ENCODE measurements at regions of chr18 and their contacts with region 1.

Region 1: DNA sequence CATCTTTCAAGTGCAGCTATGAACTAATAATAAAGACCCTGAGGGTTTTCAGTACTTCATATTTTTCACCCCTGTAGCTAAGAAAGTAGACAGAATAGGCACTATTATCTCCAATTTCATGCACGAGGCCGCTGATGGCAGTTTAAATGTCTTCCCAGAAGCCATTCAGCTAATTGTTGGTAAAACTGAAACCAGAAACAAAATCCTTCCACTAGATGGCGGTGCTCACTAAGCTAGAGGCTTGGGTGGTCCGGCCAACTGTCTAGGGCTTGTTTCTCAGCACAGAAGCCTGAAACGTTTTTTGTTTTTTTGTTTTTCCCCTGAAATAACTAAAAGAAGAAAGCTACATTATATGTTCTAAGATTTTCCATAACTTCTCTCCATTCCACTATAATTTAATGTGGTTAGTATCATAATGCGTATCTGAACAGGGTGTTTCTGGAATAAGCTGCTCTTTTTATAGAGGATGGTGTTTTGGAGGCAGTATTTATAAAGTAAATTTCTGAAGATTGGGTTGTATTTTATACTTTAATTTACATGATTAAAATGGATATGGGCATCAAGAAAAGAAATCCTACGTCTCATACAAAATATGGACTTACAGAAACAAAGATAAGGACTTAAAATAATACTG is 159.4 kb downstream of the PIK3C3 start:
- DNase-seq: peak; percentile 52
- H3K4me3 ChIP-seq: peak overlapping the region in 1 of 2 experiments; percentile 49; a peak in 1 of 4 replicates
- H3K27ac ChIP-seq: peak overlapping the region; percentile 32 to 34; a peak in 3 of 4 replicates
- H3K4me1 ChIP-seq: peaks cover 0 to 8% of the 10 kb centered on the region in 2 experiments; a peak in 2 of 4 replicates
- H3K27me3 ChIP-seq: no peaks in the 10 kb centered on the region
- CTCF ChIP-seq: peak; percentile 95
- EP300 ChIP-seq: no peak
- RAD21 ChIP-seq: peak; percentile 99

Region 2: GRCh38 chr18:42131066-42131929 is 16.9 kb after region 1 on chr18:
- CTCF ChIA-PET with region 1: interaction called, 25 read pairs
- POLR2A ChIA-PET with region 1: no interaction called
- DNase-seq: peak; percentile 35
- H3K4me3 ChIP-seq: no peak overlapping the region
- H3K27ac ChIP-seq: peak overlapping the region in 1 of 2 experiments; percentile 30; a peak in 1 of 4 replicates
- H3K4me1 ChIP-seq: peaks cover 0 to 11% of the 10 kb centered on the region in 2 experiments; a peak in 1 of 4 replicates
- H3K27me3 ChIP-seq: no peaks in the 10 kb centered on the region
- CTCF ChIP-seq: no peak
- EP300 ChIP-seq: no peak
- RAD21 ChIP-seq: no peak

Region 3: DNA sequence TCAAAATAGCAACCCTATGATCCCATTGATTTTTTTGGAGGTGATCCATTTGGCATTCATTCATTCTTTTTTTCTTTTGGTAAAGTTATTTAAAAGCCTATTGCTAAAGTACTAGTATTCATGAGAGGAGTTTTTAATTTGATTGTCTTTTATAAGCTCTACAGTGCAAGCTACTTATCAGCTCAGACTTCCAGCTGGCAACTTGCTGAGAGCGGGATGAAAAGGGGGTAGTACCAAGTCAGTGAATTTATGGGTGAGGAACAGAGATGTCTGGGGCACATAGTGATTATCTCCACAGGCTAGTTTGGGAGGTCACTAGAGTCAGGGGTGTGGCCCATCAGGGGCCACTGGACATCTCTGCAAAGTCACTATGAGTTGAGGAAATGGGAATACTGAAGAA is 43.0 kb after region 1 on chr18:
- CTCF ChIA-PET with region 1: interaction called, 13 read pairs
- POLR2A ChIA-PET with region 1: no interaction called
- DNase-seq: no peak
- H3K4me3 ChIP-seq: no peak overlapping the region
- H3K27ac ChIP-seq: no peak overlapping the region; a peak in 1 of 4 replicates
- H3K4me1 ChIP-seq: peaks cover 0 to 17% of the 10 kb centered on the region in 2 experiments; a peak in 2 of 4 replicates
- H3K27me3 ChIP-seq: no peaks in the 10 kb centered on the region
- CTCF ChIP-seq: no peak
- EP300 ChIP-seq: no peak
- RAD21 ChIP-seq: no peak

Region 4: DNA sequence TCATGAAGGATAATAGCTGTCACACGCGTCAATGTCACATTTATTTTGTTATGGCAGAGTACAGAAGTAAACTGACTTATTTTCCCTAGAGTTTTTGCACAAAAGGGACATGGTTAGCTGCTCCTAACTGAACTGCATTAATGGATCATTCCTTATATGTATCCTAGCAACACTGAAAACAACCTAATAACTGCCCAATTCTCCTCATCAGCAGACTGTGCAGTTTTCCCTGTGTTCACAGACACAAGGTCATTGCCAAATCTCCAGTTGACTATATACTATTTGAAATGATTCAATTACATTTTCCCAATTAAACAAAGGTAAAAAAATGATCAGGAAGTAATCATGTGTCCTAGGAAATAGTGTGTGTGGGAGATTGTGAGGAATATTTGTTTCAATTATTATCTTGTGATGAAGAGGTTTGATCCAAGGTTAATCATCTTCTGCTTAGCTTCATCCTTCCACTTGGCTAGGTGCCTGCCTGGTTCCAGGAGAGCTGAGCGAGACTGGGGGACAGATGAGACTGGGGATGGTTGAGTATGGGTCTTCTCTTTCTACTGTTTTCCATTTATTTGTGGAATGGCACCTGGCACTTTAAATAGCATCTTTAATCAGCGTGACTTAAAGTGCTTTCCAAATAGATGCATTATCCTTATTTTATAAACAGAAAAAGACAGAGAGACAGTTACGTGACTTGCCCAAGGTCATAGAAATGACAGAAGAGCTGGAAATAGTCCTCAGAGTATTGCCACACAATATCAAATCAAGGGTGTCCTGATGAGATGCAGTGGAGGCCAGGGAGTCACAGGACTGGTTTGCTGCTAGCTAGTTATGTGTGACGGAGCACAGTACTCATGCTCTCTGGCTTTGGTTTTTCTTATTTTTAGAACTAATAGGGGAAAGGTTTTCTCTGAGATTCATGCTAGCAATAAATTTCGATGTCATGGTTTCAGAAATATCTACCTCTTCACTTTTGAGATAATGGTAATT is 176.2 kb after region 1 on chr18:
- CTCF ChIA-PET with region 1: interaction called, 16 read pairs
- POLR2A ChIA-PET with region 1: no interaction called
- DNase-seq: no peak
- H3K4me3 ChIP-seq: no peak overlapping the region
- H3K27ac ChIP-seq: no peak overlapping the region
- H3K4me1 ChIP-seq: no peaks in the 10 kb centered on the region
- H3K27me3 ChIP-seq: no peaks in the 10 kb centered on the region
- CTCF ChIP-seq: no peak
- EP300 ChIP-seq: no peak
- RAD21 ChIP-seq: no peak

Region 5: DNA sequence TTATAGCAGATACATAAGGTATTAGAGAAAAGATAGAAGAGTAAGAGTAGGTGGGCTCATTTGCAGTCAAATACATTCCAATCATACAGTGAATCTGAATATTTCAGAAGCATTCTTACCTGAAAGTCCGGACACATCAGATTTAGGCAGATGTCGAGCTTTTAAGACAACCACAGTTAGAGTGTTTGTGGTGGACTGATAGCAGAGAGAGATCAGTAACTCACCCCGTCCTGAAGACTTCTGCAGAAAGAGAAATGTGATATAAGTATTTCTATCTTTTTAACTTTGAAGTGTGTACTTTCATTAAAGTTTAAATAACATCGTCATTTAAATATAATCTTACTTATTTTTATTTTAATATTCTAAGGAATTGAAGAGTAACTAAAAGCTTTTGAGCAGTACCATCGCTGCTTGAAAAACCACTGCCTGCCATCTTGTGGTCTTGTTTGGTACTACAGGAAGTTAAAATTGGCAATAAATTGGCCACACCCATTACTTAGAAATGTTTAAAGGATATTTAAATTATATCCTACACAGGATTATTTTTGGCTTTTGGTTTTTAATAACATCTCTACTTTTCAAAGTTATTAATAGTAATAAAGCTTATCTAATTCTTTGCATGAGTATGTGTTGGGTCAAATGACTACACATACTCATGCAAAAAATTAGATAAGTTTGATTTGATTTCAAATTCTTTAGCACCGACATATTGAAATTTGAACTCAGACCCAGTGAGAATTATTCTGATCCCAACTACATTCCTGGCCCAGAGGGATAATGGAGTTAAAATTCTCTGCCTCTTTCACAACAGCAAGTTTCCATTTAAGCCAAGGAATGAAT is 1157.4 kb after region 1 on chr18:
- CTCF ChIA-PET with region 1: interaction called, 32 read pairs
- POLR2A ChIA-PET with region 1: interaction called, 6 read pairs
- DNase-seq: peak; percentile 10
- H3K4me3 ChIP-seq: no peak overlapping the region
- H3K27ac ChIP-seq: no peak overlapping the region
- H3K4me1 ChIP-seq: peaks cover 0 to 6% of the 10 kb centered on the region in 2 experiments; a peak in 1 of 4 replicates
- H3K27me3 ChIP-seq: no peaks in the 10 kb centered on the region
- CTCF ChIP-seq: peak; percentile 74
- EP300 ChIP-seq: no peak
- RAD21 ChIP-seq: peak; percentile 89

Region 6: GRCh38 chr18:43396266-43396665 is 1281.8 kb after region 1 on chr18:
- CTCF ChIA-PET with region 1: interaction called, 13 read pairs
- POLR2A ChIA-PET with region 1: no interaction called
- DNase-seq: peak; percentile 10
- H3K4me3 ChIP-seq: no peak overlapping the region
- H3K27ac ChIP-seq: no peak overlapping the region
- H3K4me1 ChIP-seq: no peaks in the 10 kb centered on the region; a peak in 2 of 4 replicates
- H3K27me3 ChIP-seq: no peaks in the 10 kb centered on the region
- CTCF ChIP-seq: peak; percentile 59
- EP300 ChIP-seq: no peak
- RAD21 ChIP-seq: peak; percentile 83

Region 7: GRCh38 chr18:43587538-43588153 is 1473.2 kb after region 1 on chr18:
- CTCF ChIA-PET with region 1: interaction called, 20 read pairs
- POLR2A ChIA-PET with region 1: no interaction called
- DNase-seq: peak; percentile 68
- H3K4me3 ChIP-seq: no peak overlapping the region
- H3K27ac ChIP-seq: no peak overlapping the region
- H3K4me1 ChIP-seq: peaks cover 0 to 3% of the 10 kb centered on the region in 2 experiments; a peak in 2 of 4 replicates
- H3K27me3 ChIP-seq: no peaks in the 10 kb centered on the region
- CTCF ChIP-seq: peak; percentile 75
- EP300 ChIP-seq: no peak
- RAD21 ChIP-seq: peak; percentile 75

Measured in SK-N-SH (cell line).